OCI-LY7 (cell line): ENCODE measurements at regions of chr12 and their contacts with region 1.

Region 1: GRCh38 chr12:106282457-106283097 is 20.0 kb upstream of the TCP11L2 start:
- DNase-seq: peak; percentile 82
- H3K4me3 ChIP-seq: no peak overlapping the region
- H3K27ac ChIP-seq: no peak overlapping the region
- H3K4me1 ChIP-seq: peaks cover 9% of the 10 kb centered on the region
- CTCF ChIP-seq: peak; percentile 94

Region 2: GRCh38 chr12:106223485-106224354 is 58.9 kb before region 1 on chr12:
- CTCF ChIA-PET with region 1: interaction called, 14 read pairs
- POLR2A ChIA-PET with region 1: interaction called, 5 read pairs
- intact Hi-C with region 1: loop called (anchors 1 kb)
- DNase-seq: peak; percentile 69
- H3K4me3 ChIP-seq: no peak overlapping the region
- H3K27ac ChIP-seq: no peak overlapping the region
- H3K4me1 ChIP-seq: peaks cover 11% of the 10 kb centered on the region
- CTCF ChIP-seq: peak; percentile 95